ENCODE measurements at regions of chr4 and their contacts with region 1.

Region 1: GRCh38 chr4:186191200-186192065 is at the start of gene CYP4V2:
- DNase-seq: peak; percentile 90
- H3K4me3 Mint-ChIP-seq: peak within 1 kb of the TSS; percentile 96
- H3K27ac Mint-ChIP-seq: peak within 1 kb of the TSS; percentile 96
- H3K4me1 Mint-ChIP-seq: peaks cover 28% of the 10 kb centered on the region
- H3K27me3 Mint-ChIP-seq: peaks cover 2% of the 10 kb centered on the region
- total RNA-seq, gene CYP4V2: 8.3 and 8.8 TPM in 2 replicates

Region 2: GRCh38 chr4:185425647-185426352 is 765.6 kb before region 1 on chr4 and contains the start of gene UFSP2:
- intact Hi-C with region 1: loop called (anchors 2 kb)
- DNase-seq: peak; percentile 86
- H3K4me3 Mint-ChIP-seq: peak within 1 kb of the TSS; percentile 88
- H3K27ac Mint-ChIP-seq: peak within 1 kb of the TSS; percentile 92
- H3K4me1 Mint-ChIP-seq: peaks cover 35% of the 10 kb centered on the region
- H3K27me3 Mint-ChIP-seq: peaks cover 7% of the 10 kb centered on the region
- total RNA-seq, gene UFSP2: 19.8 and 19.9 TPM in 2 replicates

Region 3: GRCh38 chr4:185471235-185472102 is 720.0 kb before region 1 on chr4 and contains the start of gene CCDC110:
- intact Hi-C with region 1: loop called (anchors 1 kb)
- DNase-seq: peak; percentile 77
- H3K4me3 Mint-ChIP-seq: peak within 1 kb of the TSS; percentile 89
- H3K27ac Mint-ChIP-seq: peak within 1 kb of the TSS; percentile 47
- H3K4me1 Mint-ChIP-seq: peaks cover 4% of the 10 kb centered on the region
- H3K27me3 Mint-ChIP-seq: peaks cover 52% of the 10 kb centered on the region
- total RNA-seq, gene CCDC110: not detected in 2 replicates

Region 4: DNA sequence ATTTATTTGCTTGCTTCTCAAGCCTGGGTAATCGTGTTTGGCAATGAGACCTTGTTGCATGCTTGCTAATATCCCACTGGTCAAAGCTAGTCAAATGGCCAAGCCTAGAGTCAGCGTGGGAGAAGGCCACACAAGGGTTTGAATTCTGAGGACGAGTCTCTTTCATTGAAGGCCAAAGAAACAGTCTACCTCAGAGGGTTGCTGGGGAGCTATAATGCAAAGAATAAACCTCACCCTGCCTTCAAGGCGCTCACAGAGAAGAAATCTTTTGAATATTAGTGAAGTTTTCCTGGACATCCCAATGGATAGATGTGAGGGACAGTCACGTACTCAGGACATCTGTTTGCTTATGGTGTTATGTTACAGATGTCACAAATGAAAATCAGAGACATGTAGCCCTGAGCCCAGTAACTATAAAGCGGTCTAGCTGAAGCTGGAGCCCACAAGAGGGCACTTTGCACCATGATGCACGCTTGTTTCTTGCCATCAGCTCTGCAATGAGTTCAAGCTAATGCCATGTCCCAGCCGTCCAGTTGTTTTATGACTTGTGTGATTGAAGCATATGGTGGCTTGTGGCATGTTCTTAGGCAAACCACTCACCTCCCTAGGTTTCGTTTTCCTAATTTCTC is 123.6 kb before region 1 on chr4:
- intact Hi-C with region 1: loop called (anchors 5 kb)
- DNase-seq: no peak
- H3K4me3 Mint-ChIP-seq: no peak overlapping the region
- H3K27ac Mint-ChIP-seq: no peak overlapping the region
- H3K4me1 Mint-ChIP-seq: peaks cover 18% of the 10 kb centered on the region
- H3K27me3 Mint-ChIP-seq: peaks cover 3% of the 10 kb centered on the region

Region 5: DNA sequence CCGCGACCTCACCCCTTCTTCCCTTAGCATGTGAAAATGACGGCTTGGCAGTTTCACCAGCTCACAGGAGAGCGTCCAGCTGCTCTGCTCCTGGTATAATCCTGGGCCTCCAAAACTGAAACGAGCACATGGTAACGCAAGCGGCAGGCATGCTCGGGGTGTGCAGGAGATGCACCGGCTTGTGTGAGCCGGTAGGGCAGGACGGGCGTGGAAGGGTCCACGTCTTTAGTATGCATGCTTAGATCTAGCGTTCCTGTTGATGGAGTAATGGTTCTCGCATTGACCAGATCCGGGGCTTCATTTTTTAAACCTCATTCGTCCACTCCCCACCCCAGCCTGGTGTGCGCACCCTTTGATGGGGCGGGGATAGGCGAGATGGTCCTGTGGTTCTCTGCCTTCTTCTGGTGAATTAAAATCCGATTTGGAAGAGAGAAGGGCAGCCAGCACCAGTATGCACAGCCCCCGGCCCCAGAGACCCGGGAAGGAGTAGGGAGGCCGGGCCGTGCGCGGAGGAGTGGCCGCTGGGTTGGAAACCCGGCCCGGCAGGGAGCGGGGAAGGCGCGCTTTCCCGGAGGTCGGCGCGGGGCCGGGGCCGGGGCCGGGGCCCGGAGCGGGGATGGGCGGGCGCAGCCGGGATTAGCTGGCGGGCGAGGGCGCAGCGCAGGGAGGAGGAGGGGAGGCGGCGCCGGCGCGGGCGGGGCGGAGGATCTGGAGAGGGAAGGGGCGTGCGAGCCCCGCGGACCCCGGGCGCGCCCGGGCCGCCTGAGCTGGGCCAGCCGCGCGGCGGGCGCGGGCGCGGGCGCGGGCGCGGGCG is 47.1 kb before region 1 on chr4:
- intact Hi-C with region 1: loop called (anchors 2 kb)
- DNase-seq: no peak
- H3K4me3 Mint-ChIP-seq: peak overlapping the region; percentile 76
- H3K27ac Mint-ChIP-seq: no peak overlapping the region
- H3K4me1 Mint-ChIP-seq: peaks cover 13% of the 10 kb centered on the region
- H3K27me3 Mint-ChIP-seq: peaks cover 50% of the 10 kb centered on the region

Region 6: GRCh38 chr4:186161138-186161537 is 30.3 kb before region 1 on chr4:
- intact Hi-C with region 1: loop called (anchors 1 kb)
- DNase-seq: peak; percentile 31
- H3K4me3 Mint-ChIP-seq: peak overlapping the region; percentile 72
- H3K27ac Mint-ChIP-seq: peak overlapping the region; percentile 24
- H3K4me1 Mint-ChIP-seq: no peaks in the 10 kb centered on the region
- H3K27me3 Mint-ChIP-seq: peaks cover 1% of the 10 kb centered on the region

Measured in activated T-helper 1 cell treated with anti-CD3 and anti-CD28 coated beads, Interleukin-12 subunit alpha, Interleukin-12 subunit beta, Interleukin-2, Interleukin-4 antibody, amounts not matched to agents 30 ng/mL and 10 ng/mL and 1 ng/mL, durations not matched to agents 14 hours and 24 hours and 36 hours (primary cell).